ENCODE measurements at regions of chr17 and their contacts with region 1.

Region 1: DNA sequence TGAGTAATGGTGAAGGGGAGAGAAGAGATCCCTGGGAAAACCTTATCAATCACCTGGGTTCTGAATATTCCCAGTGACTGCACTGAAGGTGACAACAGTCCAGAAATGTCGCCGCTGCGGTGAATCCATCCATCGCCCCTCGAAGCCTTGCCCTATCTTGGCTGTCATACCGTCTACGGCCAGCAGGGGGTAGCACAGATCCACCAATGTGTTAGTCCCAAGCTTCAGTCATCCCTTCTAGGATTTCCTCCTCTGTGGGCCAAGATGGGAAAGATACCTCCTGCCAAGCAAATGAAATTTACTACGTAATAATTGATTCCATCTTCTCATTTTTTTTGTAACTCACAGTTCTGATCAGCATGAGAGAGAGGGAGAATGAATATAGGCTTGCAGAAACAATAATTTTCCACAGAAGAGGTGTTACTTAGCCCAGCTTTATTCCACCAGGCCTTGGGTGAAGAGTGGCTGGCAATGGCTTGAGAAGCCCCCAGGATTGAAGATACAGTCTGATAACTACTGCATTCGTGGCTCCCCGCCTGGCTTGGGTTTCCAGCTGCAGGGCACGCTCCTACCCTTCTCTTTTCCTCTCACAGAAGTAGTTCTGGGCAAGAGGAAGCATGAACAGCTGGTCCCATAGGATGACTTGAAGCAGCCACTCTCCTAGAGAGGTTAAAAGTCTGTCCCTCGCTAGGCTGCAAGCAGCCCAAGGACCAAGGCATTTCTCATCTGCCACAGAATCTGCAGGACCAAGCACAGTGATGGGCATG is 2.6 kb upstream of the FMNL1 start:
- DNase-seq: peak; percentile 88
- ATAC-seq: peak; percentile 28
- H3K4me3 ChIP-seq: no peak overlapping the region
- H3K4me3 Mint-ChIP-seq: peak overlapping the region; percentile 86
- H3K27ac ChIP-seq: no peak overlapping the region
- H3K27ac Mint-ChIP-seq: peak overlapping the region; percentile 82
- H3K4me1 ChIP-seq: peaks cover 19 to 37% of the 10 kb centered on the region in 2 donors
- H3K4me1 Mint-ChIP-seq: peaks cover 33% of the 10 kb centered on the region
- H3K27me3 ChIP-seq: no peaks in the 10 kb centered on the region
- H3K27me3 Mint-ChIP-seq: no peaks in the 10 kb centered on the region
- CTCF ChIP-seq: peak; percentile 93

Region 2: GRCh38 chr17:44961921-44962350 is 257.1 kb before region 1 on chr17:
- CTCF ChIA-PET with region 1: no interaction called
- POLR2A ChIA-PET with region 1: no interaction called
- intact Hi-C with region 1: no loop called
- DNase-seq: no peak
- ATAC-seq: no peak
- H3K4me3 ChIP-seq: no peak overlapping the region
- H3K4me3 Mint-ChIP-seq: no peak overlapping the region
- H3K27ac ChIP-seq: no peak overlapping the region
- H3K27ac Mint-ChIP-seq: no peak overlapping the region
- H3K4me1 ChIP-seq: peaks cover 16 to 29% of the 10 kb centered on the region in 2 donors
- H3K4me1 Mint-ChIP-seq: peaks cover 19% of the 10 kb centered on the region
- H3K27me3 ChIP-seq: peaks cover 0 to 82% (median 30%) of the 10 kb centered on the region in 4 experiments
- H3K27me3 Mint-ChIP-seq: peaks cover 61% of the 10 kb centered on the region
- CTCF ChIP-seq: no peak

Region 3: DNA sequence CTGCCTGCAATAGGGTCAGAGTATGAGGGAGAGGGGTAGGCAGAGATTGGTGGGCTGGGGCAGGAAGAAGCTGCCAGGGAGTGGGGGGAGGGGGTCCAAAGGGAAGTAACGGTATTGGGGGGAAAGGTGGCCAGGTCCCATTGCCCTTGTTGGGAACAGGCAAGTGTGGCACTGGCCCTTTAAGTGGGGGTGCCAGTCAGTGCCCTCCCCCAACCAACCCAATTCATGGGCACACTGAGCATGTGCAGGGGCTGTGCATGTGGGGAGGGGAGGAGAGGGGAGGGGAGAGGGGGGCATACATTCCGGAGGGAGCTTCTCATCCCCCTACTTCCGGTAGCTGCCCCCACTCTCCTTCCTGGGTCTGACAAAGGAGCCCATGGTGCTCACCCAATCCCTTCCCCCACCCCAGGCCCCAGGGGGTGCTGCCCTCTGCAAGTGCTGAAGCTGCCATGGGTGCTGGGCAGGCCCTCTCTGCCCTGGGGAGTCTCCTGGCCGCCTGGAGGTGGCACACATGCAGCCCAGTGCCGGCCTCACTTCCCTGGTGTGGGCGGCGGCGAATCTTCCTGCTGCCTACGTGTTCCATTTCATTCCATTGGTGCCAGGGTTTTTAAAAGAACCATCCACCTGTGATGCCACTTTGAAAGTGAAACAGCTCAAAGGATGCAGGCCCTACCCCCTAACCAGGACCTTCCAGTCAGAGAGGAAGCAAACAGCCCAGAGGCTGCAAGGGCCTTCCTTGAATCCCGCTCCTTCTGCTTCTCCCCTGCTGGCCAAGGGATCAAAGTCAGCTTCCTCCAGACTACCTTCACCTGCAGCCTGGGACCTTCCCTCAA is 46.4 kb before region 1 on chr17:
- CTCF ChIA-PET with region 1: interaction called, 16 read pairs
- POLR2A ChIA-PET with region 1: interaction called, 3 read pairs
- intact Hi-C with region 1: no loop called
- DNase-seq: peak; percentile 59
- ATAC-seq: peak; percentile 85
- H3K4me3 ChIP-seq: peak overlapping the region in 4 of 5 experiments; percentile 31 to 51 (median 49)
- H3K4me3 Mint-ChIP-seq: peak overlapping the region; percentile 86
- H3K27ac ChIP-seq: peak overlapping the region; percentile 40 to 63
- H3K27ac Mint-ChIP-seq: peak overlapping the region; percentile 97
- H3K4me1 ChIP-seq: peaks cover 11 to 16% of the 10 kb centered on the region in 2 donors
- H3K4me1 Mint-ChIP-seq: peaks cover 12% of the 10 kb centered on the region
- H3K27me3 ChIP-seq: no peaks in the 10 kb centered on the region
- H3K27me3 Mint-ChIP-seq: no peaks in the 10 kb centered on the region
- CTCF ChIP-seq: no peak

Region 4: GRCh38 chr17:45235416-45236281 is 16.6 kb after region 1 on chr17:
- CTCF ChIA-PET with region 1: interaction called, 737 read pairs
- POLR2A ChIA-PET with region 1: interaction called, 149 read pairs
- intact Hi-C with region 1: loop called (anchors 1 kb)
- DNase-seq: peak; percentile 87
- ATAC-seq: peak; percentile 56
- H3K4me3 ChIP-seq: no peak overlapping the region
- H3K4me3 Mint-ChIP-seq: no peak overlapping the region
- H3K27ac ChIP-seq: peak overlapping the region; percentile 0 to 43
- H3K27ac Mint-ChIP-seq: peak overlapping the region; percentile 82
- H3K4me1 ChIP-seq: peaks cover 18 to 45% of the 10 kb centered on the region in 2 donors
- H3K4me1 Mint-ChIP-seq: peaks cover 47% of the 10 kb centered on the region
- H3K27me3 ChIP-seq: no peaks in the 10 kb centered on the region
- H3K27me3 Mint-ChIP-seq: no peaks in the 10 kb centered on the region
- CTCF ChIP-seq: peak; percentile 83

Region 5: DNA sequence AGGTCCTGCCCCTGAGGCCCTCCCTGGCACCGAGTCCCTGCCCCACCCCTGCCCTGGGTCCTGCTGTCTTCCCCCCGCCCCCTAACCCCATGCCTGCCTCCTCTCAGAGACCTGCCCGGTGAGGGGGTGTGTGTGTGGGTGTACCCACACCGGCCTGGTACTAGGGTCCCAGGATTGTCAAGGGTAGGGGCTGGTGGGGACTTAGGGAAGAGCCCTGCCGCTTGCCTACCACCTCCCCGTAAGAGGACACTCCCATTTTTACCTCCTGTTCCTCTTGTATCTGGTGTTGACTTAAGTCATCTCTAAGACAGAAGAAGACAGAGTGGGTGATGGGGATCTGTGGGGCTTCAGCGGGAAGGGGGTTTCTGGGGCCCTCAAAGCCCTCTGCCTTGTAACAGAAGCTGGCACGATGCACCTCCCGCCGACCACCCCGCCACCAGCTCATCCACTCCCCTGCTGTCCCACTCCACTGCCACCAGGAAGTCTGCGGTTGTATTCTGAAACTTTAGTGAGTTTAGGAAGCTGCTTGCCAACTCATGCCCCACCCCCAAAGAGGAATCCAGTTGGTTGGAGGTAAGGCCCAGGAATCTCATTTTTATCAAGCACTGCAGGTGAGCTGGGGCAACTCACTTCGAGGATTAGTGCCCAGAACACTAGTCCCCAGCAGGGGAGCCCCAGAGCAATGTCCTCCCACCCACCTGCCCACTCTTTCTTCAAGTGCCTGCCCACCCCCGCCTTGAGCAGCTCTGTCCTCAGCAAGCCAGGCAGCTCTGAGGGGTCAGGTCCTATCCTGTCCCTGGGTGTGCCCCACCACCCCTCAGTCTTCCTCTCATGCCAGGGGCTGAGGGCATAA is 37.3 kb after region 1 on chr17:
- CTCF ChIA-PET with region 1: interaction called, 737 read pairs
- POLR2A ChIA-PET with region 1: no interaction called
- intact Hi-C with region 1: no loop called
- DNase-seq: no peak
- ATAC-seq: no peak
- H3K4me3 ChIP-seq: no peak overlapping the region
- H3K4me3 Mint-ChIP-seq: no peak overlapping the region
- H3K27ac ChIP-seq: no peak overlapping the region
- H3K27ac Mint-ChIP-seq: no peak overlapping the region
- H3K4me1 ChIP-seq: peaks cover 5 to 9% of the 10 kb centered on the region in 2 donors
- H3K4me1 Mint-ChIP-seq: peaks cover 8% of the 10 kb centered on the region
- H3K27me3 ChIP-seq: no peaks in the 10 kb centered on the region
- H3K27me3 Mint-ChIP-seq: no peaks in the 10 kb centered on the region
- CTCF ChIP-seq: no peak

Region 6: DNA sequence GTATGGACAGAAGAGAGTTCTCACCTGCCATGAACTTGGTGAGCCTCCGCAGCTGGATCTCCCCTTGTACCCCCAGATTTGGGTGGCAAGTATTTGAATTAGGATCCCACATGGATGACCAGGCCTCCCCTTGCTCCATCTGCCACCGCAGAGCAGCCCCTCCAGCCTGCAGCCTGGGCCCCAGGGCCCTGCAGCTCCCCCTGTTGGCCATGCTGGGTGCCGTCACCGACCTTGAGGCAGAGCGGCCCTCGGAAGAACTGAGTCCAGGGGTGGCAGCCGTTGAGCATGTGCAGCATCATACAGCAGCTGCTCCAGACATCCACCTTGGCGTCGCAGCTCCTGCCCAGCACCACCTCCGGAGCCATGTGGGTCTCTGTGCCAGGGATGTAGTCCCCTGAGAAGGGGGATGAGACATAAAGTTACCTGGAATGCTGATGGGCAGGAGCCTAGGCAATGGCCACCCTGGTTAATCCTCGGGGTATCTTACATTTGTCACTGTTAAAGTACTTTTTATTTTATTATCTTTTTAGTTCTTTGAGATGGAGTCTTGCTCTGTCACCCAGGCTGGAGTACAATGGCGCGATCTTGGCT is 51.8 kb after region 1 on chr17:
- CTCF ChIA-PET with region 1: interaction called, 115 read pairs
- POLR2A ChIA-PET with region 1: no interaction called
- intact Hi-C with region 1: loop called (anchors 1 kb)
- DNase-seq: peak; percentile 54
- ATAC-seq: peak; percentile 54
- H3K4me3 ChIP-seq: no peak overlapping the region
- H3K4me3 Mint-ChIP-seq: no peak overlapping the region
- H3K27ac ChIP-seq: no peak overlapping the region
- H3K27ac Mint-ChIP-seq: no peak overlapping the region
- H3K4me1 ChIP-seq: no peaks in the 10 kb centered on the region
- H3K4me1 Mint-ChIP-seq: no peaks in the 10 kb centered on the region
- H3K27me3 ChIP-seq: no peaks in the 10 kb centered on the region
- H3K27me3 Mint-ChIP-seq: no peaks in the 10 kb centered on the region
- CTCF ChIP-seq: peak; percentile 73

Region 7: GRCh38 chr17:45317112-45317928 is 98.2 kb after region 1 on chr17:
- CTCF ChIA-PET with region 1: interaction called, 76 read pairs
- POLR2A ChIA-PET with region 1: interaction called, 8 read pairs
- intact Hi-C with region 1: no loop called
- DNase-seq: peak; percentile 100
- ATAC-seq: peak; percentile 80
- H3K4me3 ChIP-seq: peak overlapping the region; percentile 32 to 90 (median 62)
- H3K4me3 Mint-ChIP-seq: peak overlapping the region; percentile 92
- H3K27ac ChIP-seq: peak overlapping the region; percentile 47 to 93
- H3K27ac Mint-ChIP-seq: peak overlapping the region; percentile 95
- H3K4me1 ChIP-seq: peaks cover 39 to 41% of the 10 kb centered on the region in 2 donors
- H3K4me1 Mint-ChIP-seq: peaks cover 48% of the 10 kb centered on the region
- H3K27me3 ChIP-seq: no peaks in the 10 kb centered on the region
- H3K27me3 Mint-ChIP-seq: no peaks in the 10 kb centered on the region
- CTCF ChIP-seq: no peak

Region 8: DNA sequence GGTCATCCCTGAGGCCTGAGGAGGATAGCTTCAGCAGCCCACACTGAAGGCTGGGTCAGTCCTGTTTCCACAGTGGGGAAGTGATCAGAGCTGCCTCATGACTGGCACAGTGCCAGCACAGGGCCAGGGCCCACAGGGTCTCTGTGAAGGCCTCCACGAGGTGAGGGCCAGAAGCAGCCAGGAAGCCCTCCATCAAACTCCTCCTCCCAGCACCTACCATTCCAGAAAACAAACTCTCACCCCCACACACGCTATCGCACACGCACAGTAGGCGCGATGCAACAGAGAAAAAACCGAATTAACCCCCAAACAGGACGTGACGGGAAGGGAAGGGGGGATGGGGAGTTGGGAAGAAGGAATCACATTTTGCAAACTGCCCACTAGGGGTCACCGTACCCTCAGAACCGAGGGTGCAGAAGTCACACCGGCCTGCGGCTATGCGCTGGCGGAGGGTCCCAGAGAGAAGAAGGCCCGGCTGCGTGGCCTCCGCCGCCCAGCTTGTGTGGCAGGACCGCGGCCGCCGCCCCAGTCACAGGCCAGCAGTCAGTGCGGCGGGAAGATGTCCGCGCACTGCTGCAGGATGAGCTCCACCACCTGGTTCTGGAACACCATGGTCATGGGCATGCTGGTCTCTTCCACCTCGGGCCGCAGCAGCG is 176.0 kb after region 1 on chr17:
- CTCF ChIA-PET with region 1: interaction called, 108 read pairs
- POLR2A ChIA-PET with region 1: interaction called, 3 read pairs
- intact Hi-C with region 1: no loop called
- DNase-seq: peak; percentile 74
- ATAC-seq: peak; percentile 57
- H3K4me3 ChIP-seq: no peak overlapping the region
- H3K4me3 Mint-ChIP-seq: no peak overlapping the region
- H3K27ac ChIP-seq: no peak overlapping the region
- H3K27ac Mint-ChIP-seq: peak overlapping the region; percentile 59
- H3K4me1 ChIP-seq: no peaks in the 10 kb centered on the region
- H3K4me1 Mint-ChIP-seq: peaks cover 2% of the 10 kb centered on the region
- H3K27me3 ChIP-seq: no peaks in the 10 kb centered on the region
- H3K27me3 Mint-ChIP-seq: no peaks in the 10 kb centered on the region
- CTCF ChIP-seq: peak; percentile 74

Measured in B cell (primary cell).